ENCODE measurements at regions of chr5 and their contacts with region 1.

Region 1: GRCh38 chr5:4737868-4738267 is 402.3 kb upstream of the ADAMTS16 start:
- ATAC-seq: no peak
- H3K4me3 ChIP-seq: no peak overlapping the region
- H3K27ac ChIP-seq: no peak overlapping the region
- H3K4me1 ChIP-seq: no peaks in the 10 kb centered on the region

Region 2: GRCh38 chr5:4533457-4534105 is 204.3 kb before region 1 on chr5:
- in situ Hi-C with region 1: no loop called
- ATAC-seq: no peak
- H3K4me3 ChIP-seq: no peak overlapping the region
- H3K27ac ChIP-seq: no peak overlapping the region
- H3K4me1 ChIP-seq: peaks cover 0 to 15% of the 10 kb centered on the region in 2 donors

Region 3: GRCh38 chr5:4837489-4838058 is 99.7 kb after region 1 on chr5:
- in situ Hi-C with region 1: loop called in 1 of 9 experiments (anchors 25 kb)
- ATAC-seq: no peak
- H3K4me3 ChIP-seq: no peak overlapping the region
- H3K27ac ChIP-seq: no peak overlapping the region
- H3K4me1 ChIP-seq: peaks cover 0 to 12% of the 10 kb centered on the region in 2 donors